Left colon (tissue), 2 donors: ENCODE measurements at regions of chr9 and their contacts with region 1.

Region 1: GRCh38 chr9:116566677-116567488 is 120.2 kb upstream of the TRIM32 start:
- DNase-seq: peak; percentile 23 to 44
- ATAC-seq: peak; percentile 96

Region 2: GRCh38 chr9:116149844-116150243 is 417.0 kb before region 1 on chr9:
- intact Hi-C with region 1: loop called in 1 of 2 experiments (anchors 5 kb)
- DNase-seq: peak in 1 of 2 donors; percentile 27
- ATAC-seq: peak; percentile 82